CD8-positive, alpha-beta T cell (primary cell): ENCODE measurements at regions of chr3 and their contacts with region 1.

Region 1: GRCh38 chr3:48439820-48440589 is at the starts of genes CCDC51 and TMA7:
- DNase-seq: peak; percentile 95 to 99 (median 98)
- ATAC-seq: peak; percentile 91
- H3K4me3 ChIP-seq: peak within 1 kb of the TSS; percentile 82 to 86
- H3K4me3 Mint-ChIP-seq: peak within 1 kb of the TSS; percentile 89
- H3K27ac ChIP-seq: peak within 1 kb of the TSS; percentile 95 to 98
- H3K27ac Mint-ChIP-seq: peak within 1 kb of the TSS; percentile 97
- H3K4me1 ChIP-seq: peaks cover 21% of the 10 kb centered on the region
- H3K4me1 Mint-ChIP-seq: peaks cover 37% of the 10 kb centered on the region
- H3K27me3 ChIP-seq: no peaks in the 10 kb centered on the region
- H3K27me3 Mint-ChIP-seq: no peaks in the 10 kb centered on the region
- CTCF ChIP-seq: no peak
- total RNA-seq, gene CCDC51: 2.9 to 4.7 TPM
- total RNA-seq, gene TMA7: 279 to 297 TPM

Region 2: GRCh38 chr3:47513125-47513929 is 926.7 kb before region 1 on chr3 and contains the start of gene ELP6:
- CTCF ChIA-PET with region 1: no interaction called
- POLR2A ChIA-PET with region 1: no interaction called
- intact Hi-C with region 1: loop called in 1 of 2 experiments (anchors 5 kb)
- DNase-seq: peak; percentile 92 to 99 (median 96)
- ATAC-seq: peak; percentile 91
- H3K4me3 ChIP-seq: peak within 1 kb of the TSS; percentile 85 to 99
- H3K4me3 Mint-ChIP-seq: peak within 1 kb of the TSS; percentile 98
- H3K27ac ChIP-seq: peak within 1 kb of the TSS; percentile 88 to 95
- H3K27ac Mint-ChIP-seq: peak within 1 kb of the TSS; percentile 97
- H3K4me1 ChIP-seq: peaks cover 11% of the 10 kb centered on the region
- H3K4me1 Mint-ChIP-seq: peaks cover 22% of the 10 kb centered on the region
- H3K27me3 ChIP-seq: no peaks in the 10 kb centered on the region
- H3K27me3 Mint-ChIP-seq: no peaks in the 10 kb centered on the region
- CTCF ChIP-seq: peak; percentile 66
- total RNA-seq, gene ELP6: 13.0 to 13.7 TPM

Region 3: DNA sequence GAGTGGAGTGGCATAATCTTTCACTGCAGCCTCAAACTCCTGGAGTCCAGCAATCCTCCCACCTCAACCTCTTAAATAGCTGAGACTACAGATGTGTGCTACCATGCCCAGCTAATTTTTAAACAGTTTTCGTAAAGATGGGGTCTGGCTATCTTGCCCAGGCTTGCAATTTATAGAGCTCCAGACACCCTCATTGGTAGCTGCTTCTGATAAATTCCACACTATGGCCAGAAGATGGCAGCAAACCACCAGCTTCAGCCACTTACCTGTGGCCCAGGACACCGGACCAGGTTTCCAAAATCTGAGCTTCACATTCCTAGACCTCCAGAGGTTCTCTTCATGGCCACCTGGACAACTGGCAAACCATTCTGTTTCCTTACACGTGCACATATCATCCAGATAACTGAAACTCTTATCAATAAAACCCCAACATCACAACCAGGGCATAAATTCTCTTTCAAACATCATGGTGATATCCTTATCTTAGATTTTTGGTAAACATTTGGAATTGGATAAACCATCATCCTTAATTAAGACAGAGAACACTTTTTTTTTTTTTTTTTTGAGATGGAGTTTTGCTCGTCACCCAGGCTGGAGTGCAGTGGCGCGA is 39.1 kb before region 1 on chr3:
- CTCF ChIA-PET with region 1: interaction called, 357 read pairs
- POLR2A ChIA-PET with region 1: interaction called, 10 read pairs
- intact Hi-C with region 1: loop called (anchors 1 kb)
- DNase-seq: peak; percentile 29 to 87 (median 64)
- ATAC-seq: peak; percentile 90
- H3K4me3 ChIP-seq: no peak overlapping the region
- H3K4me3 Mint-ChIP-seq: no peak overlapping the region
- H3K27ac ChIP-seq: no peak overlapping the region
- H3K27ac Mint-ChIP-seq: no peak overlapping the region
- H3K4me1 ChIP-seq: no peaks in the 10 kb centered on the region
- H3K4me1 Mint-ChIP-seq: no peaks in the 10 kb centered on the region
- H3K27me3 ChIP-seq: no peaks in the 10 kb centered on the region
- H3K27me3 Mint-ChIP-seq: peaks cover 3% of the 10 kb centered on the region
- CTCF ChIP-seq: peak; percentile 87

Region 4: GRCh38 chr3:48465531-48466378 is 25.8 kb after region 1 on chr3:
- CTCF ChIA-PET with region 1: interaction called, 48 read pairs
- POLR2A ChIA-PET with region 1: interaction called, 8 read pairs
- intact Hi-C with region 1: no loop called
- DNase-seq: peak; percentile 51 to 87 (median 81)
- ATAC-seq: peak; percentile 93
- H3K4me3 ChIP-seq: peak overlapping the region; percentile 77 to 95
- H3K4me3 Mint-ChIP-seq: peak overlapping the region; percentile 87
- H3K27ac ChIP-seq: peak overlapping the region; percentile 90 to 98
- H3K27ac Mint-ChIP-seq: peak overlapping the region; percentile 97
- H3K4me1 ChIP-seq: peaks cover 53% of the 10 kb centered on the region
- H3K4me1 Mint-ChIP-seq: peaks cover 55% of the 10 kb centered on the region
- H3K27me3 ChIP-seq: no peaks in the 10 kb centered on the region
- H3K27me3 Mint-ChIP-seq: no peaks in the 10 kb centered on the region
- CTCF ChIP-seq: no peak

Region 5: DNA sequence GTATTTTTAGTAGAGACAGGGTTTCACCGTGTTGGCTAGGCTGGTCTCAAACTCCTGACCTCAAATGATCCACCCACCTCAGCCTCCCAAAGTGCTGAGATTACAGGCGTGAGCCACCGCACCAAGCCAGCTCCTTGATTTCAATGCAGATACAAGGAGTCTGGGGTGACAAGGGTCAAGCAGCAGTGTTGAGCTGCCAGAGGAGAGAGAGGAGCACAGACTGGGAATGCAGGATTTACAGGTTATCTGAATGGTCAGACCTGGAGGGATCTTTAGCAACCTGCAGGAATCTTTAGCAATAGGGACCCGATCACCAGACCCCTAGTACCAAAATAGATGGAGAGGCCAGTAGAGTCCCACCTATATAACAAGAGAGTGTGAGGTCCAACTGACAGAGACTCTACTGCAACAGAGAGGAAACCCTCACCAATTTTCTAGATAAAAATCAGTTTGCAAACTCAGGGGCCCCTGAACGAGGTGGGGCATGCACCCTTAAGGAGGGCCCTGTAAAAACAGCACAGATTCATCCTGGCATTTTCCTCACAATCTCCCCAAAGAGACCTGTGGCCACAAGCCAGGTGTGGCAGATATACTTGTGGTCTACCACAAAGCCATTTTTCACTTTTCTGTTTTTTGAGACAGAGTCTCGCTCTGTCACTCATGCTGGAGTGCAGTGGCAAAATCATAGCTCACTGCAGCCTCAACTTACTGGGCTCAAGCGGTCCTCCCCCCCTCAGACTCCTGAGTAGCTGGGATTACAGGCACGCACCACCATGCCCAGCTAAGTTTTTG is 74.6 kb after region 1 on chr3:
- CTCF ChIA-PET with region 1: interaction called, 156 read pairs
- POLR2A ChIA-PET with region 1: interaction called, 4 read pairs
- intact Hi-C with region 1: no loop called
- DNase-seq: peak in 6 of 9 experiments; percentile 28 to 67 (median 42)
- ATAC-seq: peak; percentile 40
- H3K4me3 ChIP-seq: peak overlapping the region in 1 of 2 experiments; percentile 13
- H3K4me3 Mint-ChIP-seq: peak overlapping the region; percentile 63
- H3K27ac ChIP-seq: no peak overlapping the region
- H3K27ac Mint-ChIP-seq: peak overlapping the region; percentile 62
- H3K4me1 ChIP-seq: peaks cover 59% of the 10 kb centered on the region
- H3K4me1 Mint-ChIP-seq: peaks cover 61% of the 10 kb centered on the region
- H3K27me3 ChIP-seq: no peaks in the 10 kb centered on the region
- H3K27me3 Mint-ChIP-seq: no peaks in the 10 kb centered on the region
- CTCF ChIP-seq: no peak

Region 6: DNA sequence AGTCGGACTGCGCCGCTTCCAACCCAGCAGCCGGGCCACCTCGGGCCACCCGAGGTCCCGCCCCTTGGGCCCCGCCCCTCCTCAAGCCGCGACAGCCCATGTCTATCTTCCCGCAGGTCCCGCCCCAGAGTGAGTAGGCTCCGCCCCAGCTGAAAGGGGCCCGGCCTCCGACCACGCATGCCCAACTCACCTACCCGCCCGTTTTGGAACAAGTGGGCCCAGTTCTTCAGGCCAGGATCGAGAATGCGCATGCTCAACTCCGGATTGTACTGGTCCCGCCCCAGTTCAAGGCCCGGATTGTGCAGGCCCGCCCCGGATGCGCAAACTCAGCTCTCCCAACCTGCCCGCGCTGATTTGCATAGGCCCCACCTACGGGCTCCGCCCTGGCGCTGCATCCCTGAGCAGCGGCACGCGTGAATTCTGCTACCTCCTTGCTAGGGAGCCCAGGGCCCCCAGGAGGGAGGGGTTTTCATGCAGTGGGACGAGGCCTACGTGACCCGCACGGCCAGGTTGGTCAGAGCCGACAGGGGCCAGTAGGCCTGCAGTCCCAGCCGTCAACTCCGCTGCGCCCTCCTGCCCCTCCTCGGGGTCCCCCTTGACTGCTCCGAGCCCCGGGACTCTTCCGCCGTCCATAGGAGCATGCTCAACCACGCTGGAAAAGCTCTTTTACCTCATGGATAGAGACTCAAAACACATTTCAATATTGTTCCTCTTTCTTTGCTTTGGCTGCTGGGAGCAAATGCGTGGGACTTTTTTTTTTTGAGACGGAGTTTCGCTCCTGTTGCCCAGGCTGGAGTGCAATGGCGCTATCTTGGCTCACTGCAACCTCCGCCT is 117.0 kb after region 1 on chr3 and contains the start of gene PFKFB4:
- CTCF ChIA-PET with region 1: interaction called, 142 read pairs
- POLR2A ChIA-PET with region 1: interaction called, 3 read pairs
- intact Hi-C with region 1: loop called (anchors 1 to 2 kb)
- DNase-seq: peak; percentile 97 to 100 (median 99)
- ATAC-seq: peak; percentile 88
- H3K4me3 ChIP-seq: peak within 1 kb of the TSS; percentile 61 to 76
- H3K4me3 Mint-ChIP-seq: peak within 1 kb of the TSS; percentile 87
- H3K27ac ChIP-seq: peak within 1 kb of the TSS in 1 of 2 experiments; percentile 46
- H3K27ac Mint-ChIP-seq: peak within 1 kb of the TSS; percentile 81
- H3K4me1 ChIP-seq: peaks cover 7% of the 10 kb centered on the region
- H3K4me1 Mint-ChIP-seq: peaks cover 23% of the 10 kb centered on the region
- H3K27me3 ChIP-seq: no peaks in the 10 kb centered on the region
- H3K27me3 Mint-ChIP-seq: no peaks in the 10 kb centered on the region
- CTCF ChIP-seq: no peak
- total RNA-seq, gene PFKFB4: 1.2 to 1.3 TPM